ENCODE measurements at regions of chr17 and their contacts with region 1.

Region 1: GRCh38 chr17:58352014-58352842 is at the start of gene SUPT4H1:
- DNase-seq: peak; percentile 92
- H3K4me3 Mint-ChIP-seq: peak within 1 kb of the TSS; percentile 100
- H3K27ac Mint-ChIP-seq: peak within 1 kb of the TSS; percentile 97
- H3K4me1 Mint-ChIP-seq: peaks cover 47% of the 10 kb centered on the region
- H3K27me3 Mint-ChIP-seq: no peaks in the 10 kb centered on the region
- total RNA-seq, gene SUPT4H1: 76.6 to 76.9 TPM

Region 2: GRCh38 chr17:58329035-58329809 is 23.0 kb before region 1 on chr17:
- CTCF ChIA-PET with region 1: interaction called, 4 read pairs
- intact Hi-C with region 1: loop called (anchors 2 kb)
- DNase-seq: peak; percentile 91
- H3K4me3 Mint-ChIP-seq: peak overlapping the region; percentile 92
- H3K27ac Mint-ChIP-seq: peak overlapping the region; percentile 99
- H3K4me1 Mint-ChIP-seq: peaks cover 40% of the 10 kb centered on the region
- H3K27me3 Mint-ChIP-seq: peaks cover 14% of the 10 kb centered on the region

Region 3: DNA sequence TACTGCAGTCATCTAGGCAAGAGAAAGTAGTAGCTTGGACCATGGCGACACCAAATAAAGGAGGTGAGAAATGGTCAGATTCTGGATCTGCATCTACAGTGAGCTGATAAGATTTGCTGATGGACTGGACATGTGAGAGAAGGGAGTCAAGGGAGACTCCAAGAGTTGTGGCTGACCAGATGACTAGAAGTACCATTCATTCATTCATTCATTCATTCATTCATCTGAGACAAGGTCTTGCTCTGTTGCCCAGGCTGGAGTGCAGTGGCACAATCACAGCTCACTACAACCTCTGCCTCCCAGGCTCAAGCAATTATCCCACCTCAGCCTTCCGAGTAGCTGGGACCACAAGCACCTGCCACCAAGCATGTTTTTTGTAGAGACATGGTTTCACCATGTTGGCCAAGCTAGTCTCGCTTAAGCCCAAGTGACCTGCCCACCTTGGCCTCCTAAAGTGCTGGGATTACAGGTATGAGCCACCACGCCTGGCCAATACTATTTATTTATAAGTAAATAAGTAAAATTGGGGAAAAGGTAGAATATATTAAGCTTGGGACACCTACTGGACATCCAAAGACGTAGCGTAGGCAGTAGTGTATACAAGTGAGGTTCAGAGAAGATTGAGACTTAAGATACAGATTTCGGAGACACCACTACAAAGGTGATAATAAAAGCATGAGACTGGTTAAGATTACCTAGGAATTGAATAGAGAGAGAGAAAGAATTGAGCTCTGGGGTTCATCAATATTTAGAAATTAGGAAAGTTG is 80.8 kb after region 1 on chr17:
- CTCF ChIA-PET with region 1: no interaction called
- intact Hi-C with region 1: no loop called
- DNase-seq: no peak
- H3K4me3 Mint-ChIP-seq: no peak overlapping the region
- H3K27ac Mint-ChIP-seq: no peak overlapping the region
- H3K4me1 Mint-ChIP-seq: no peaks in the 10 kb centered on the region
- H3K27me3 Mint-ChIP-seq: no peaks in the 10 kb centered on the region

Region 4: DNA sequence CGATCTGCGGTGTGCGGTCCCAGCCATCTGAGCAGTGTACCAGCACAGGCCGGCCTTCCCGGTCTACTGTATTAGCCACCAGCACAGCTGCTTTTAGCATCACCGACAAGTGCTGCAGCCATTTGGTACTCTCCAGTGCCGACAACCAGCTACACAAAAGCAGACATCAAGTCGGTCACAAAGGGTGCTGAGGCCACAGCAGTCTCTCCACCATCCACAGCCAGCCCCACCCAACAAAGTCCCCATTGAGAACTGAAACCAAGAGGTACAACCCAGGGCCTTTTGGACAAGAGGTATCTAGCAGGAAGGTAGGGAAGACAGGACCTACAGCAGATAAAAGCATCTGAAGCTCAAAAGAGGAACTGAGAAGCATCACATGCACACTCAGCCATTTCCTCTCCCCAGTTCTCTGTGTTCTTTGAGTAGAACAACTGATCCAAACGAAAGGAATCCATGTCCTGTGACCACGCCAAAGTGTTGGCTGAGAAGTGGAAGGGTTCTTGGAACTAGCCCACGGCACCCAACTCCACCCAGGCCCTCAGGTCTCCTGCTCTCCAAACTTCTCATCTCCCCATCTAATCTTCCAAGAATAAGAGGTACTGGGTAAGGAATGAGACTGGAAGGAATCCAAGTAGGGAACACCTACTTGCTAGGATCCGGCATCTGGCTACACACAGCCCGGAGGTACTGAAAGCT is 152.7 kb after region 1 on chr17:
- CTCF ChIA-PET with region 1: no interaction called
- intact Hi-C with region 1: no loop called
- DNase-seq: no peak
- H3K4me3 Mint-ChIP-seq: no peak overlapping the region
- H3K27ac Mint-ChIP-seq: no peak overlapping the region
- H3K4me1 Mint-ChIP-seq: no peaks in the 10 kb centered on the region
- H3K27me3 Mint-ChIP-seq: no peaks in the 10 kb centered on the region

Measured in activated naive CD4-positive, alpha-beta T cell treated with anti-CD3 and anti-CD28 coated beads for 36 hours (primary cell).